ENCODE measurements at regions of chr6 and their contacts with region 1.

Region 1: DNA sequence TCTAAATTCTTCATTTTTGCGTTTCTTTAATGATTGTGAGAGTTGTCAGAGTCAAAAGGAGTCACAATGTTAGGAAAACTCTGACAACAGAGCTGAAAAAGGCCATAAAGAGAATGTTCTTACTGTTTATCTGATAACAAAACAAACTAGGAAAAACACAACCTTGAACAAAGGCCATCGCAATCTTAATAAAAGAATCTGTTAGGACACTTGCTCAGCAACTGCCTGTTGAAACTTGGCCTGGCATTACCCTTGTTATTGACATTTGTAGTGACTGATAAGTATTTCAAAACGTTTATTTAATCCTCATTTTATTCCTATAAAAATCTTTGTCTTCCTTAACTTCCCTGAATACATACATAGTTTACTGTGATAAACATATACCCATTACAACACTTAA is 15.7 kb downstream of the GSTA1 start:
- DNase-seq: no peak
- ATAC-seq: no peak
- H3K4me3 ChIP-seq: no peak overlapping the region
- H3K4me3 Mint-ChIP-seq: no peak overlapping the region
- H3K27ac ChIP-seq: no peak overlapping the region
- H3K27ac Mint-ChIP-seq: no peak overlapping the region
- H3K4me1 ChIP-seq: no peaks in the 10 kb centered on the region
- H3K4me1 Mint-ChIP-seq: no peaks in the 10 kb centered on the region
- H3K27me3 ChIP-seq: no peaks in the 10 kb centered on the region
- H3K27me3 Mint-ChIP-seq: peaks cover 6% of the 10 kb centered on the region
- CTCF ChIP-seq: no peak

Region 2: GRCh38 chr6:52829046-52829817 is 41.3 kb after region 1 on chr6:
- CTCF ChIA-PET with region 1: no interaction called
- POLR2A ChIA-PET with region 1: no interaction called
- intact Hi-C with region 1: loop called in 1 of 2 experiments (anchors 1 kb)
- DNase-seq: no peak
- ATAC-seq: no peak
- H3K4me3 ChIP-seq: no peak overlapping the region
- H3K4me3 Mint-ChIP-seq: no peak overlapping the region
- H3K27ac ChIP-seq: no peak overlapping the region
- H3K27ac Mint-ChIP-seq: no peak overlapping the region
- H3K4me1 ChIP-seq: no peaks in the 10 kb centered on the region
- H3K4me1 Mint-ChIP-seq: no peaks in the 10 kb centered on the region
- H3K27me3 ChIP-seq: no peaks in the 10 kb centered on the region
- H3K27me3 Mint-ChIP-seq: peaks cover 12% of the 10 kb centered on the region
- CTCF ChIP-seq: no peak

Measured in CD8-positive, alpha-beta T cell (primary cell).